Activated B cell treated with CpG ODN at 0.5 μM for 24 hours (primary cell): ENCODE measurements at regions of chr5 and their contacts with region 1.

Region 1: GRCh38 chr5:17216176-17216973 is 1.1 kb upstream of the BASP1 start:
- DNase-seq: peak; percentile 69
- ATAC-seq: peak; percentile 41
- H3K4me3 Mint-ChIP-seq: peak overlapping the region; percentile 94
- H3K27ac Mint-ChIP-seq: peak overlapping the region; percentile 97
- H3K4me1 Mint-ChIP-seq: peaks cover 59% of the 10 kb centered on the region
- H3K27me3 Mint-ChIP-seq: no peaks in the 10 kb centered on the region
- CTCF ChIP-seq: peak; percentile 65

Region 2: GRCh38 chr5:17189381-17190036 is 26.9 kb before region 1 on chr5:
- CTCF ChIA-PET with region 1: interaction called, 20 read pairs
- POLR2A ChIA-PET with region 1: interaction called, 6 read pairs
- intact Hi-C with region 1: no loop called
- DNase-seq: peak; percentile 44
- ATAC-seq: peak; percentile 37
- H3K4me3 Mint-ChIP-seq: no peak overlapping the region
- H3K27ac Mint-ChIP-seq: no peak overlapping the region
- H3K4me1 Mint-ChIP-seq: peaks cover 7% of the 10 kb centered on the region
- H3K27me3 Mint-ChIP-seq: peaks cover 3% of the 10 kb centered on the region
- CTCF ChIP-seq: no peak

Region 3: DNA sequence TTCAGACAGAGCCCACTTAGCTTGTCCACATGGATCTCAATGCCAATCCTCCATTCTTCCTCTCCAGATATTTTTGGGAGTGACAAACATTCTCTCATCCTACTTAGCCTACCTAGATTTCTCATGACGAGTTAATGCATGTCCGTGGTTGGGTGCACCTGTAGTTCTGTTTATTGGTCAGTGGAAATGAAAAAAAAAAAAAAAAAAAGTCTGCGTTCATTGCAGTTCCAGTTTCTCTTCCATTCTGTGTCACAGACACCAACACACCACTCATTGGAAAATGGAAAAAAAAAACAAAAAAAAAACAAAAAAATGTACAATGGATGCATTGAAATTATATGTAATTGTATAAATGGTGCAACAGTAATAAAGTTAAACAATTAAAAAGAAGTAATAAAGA is 60.1 kb after region 1 on chr5:
- CTCF ChIA-PET with region 1: interaction called, 20 read pairs
- POLR2A ChIA-PET with region 1: interaction called, 69 read pairs
- intact Hi-C with region 1: loop called (anchors 1 kb)
- DNase-seq: no peak
- ATAC-seq: no peak
- H3K4me3 Mint-ChIP-seq: peak overlapping the region; percentile 55
- H3K27ac Mint-ChIP-seq: peak overlapping the region; percentile 94
- H3K4me1 Mint-ChIP-seq: peaks cover 87% of the 10 kb centered on the region
- H3K27me3 Mint-ChIP-seq: no peaks in the 10 kb centered on the region
- CTCF ChIP-seq: no peak

Region 4: DNA sequence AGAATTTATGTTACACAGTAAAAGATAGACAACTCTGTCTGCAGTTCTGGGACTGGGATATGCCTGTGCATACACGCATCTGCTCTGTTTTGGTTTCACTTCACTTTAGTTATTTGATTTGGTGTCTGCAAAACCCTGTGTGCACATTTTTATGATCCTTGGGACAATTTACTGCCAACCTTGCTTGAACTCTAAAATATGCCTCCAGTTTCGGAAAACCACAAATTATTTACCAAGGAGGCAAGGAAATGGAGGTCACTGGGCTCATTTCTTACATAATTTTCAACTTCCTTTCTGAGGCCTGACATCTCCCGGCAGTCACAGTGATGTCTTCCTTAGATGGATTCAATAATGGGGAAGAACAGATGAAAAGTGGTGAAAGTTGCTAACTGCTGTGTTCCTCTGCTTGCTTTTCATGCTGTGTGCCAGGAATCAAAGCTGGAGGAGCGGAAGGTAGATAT is 220.4 kb after region 1 on chr5:
- CTCF ChIA-PET with region 1: interaction called, 3 read pairs
- POLR2A ChIA-PET with region 1: interaction called, 6 read pairs
- intact Hi-C with region 1: loop called (anchors 1 kb)
- DNase-seq: no peak
- ATAC-seq: peak; percentile 82
- H3K4me3 Mint-ChIP-seq: peak overlapping the region; percentile 79
- H3K27ac Mint-ChIP-seq: peak overlapping the region; percentile 82
- H3K4me1 Mint-ChIP-seq: peaks cover 27% of the 10 kb centered on the region
- H3K27me3 Mint-ChIP-seq: no peaks in the 10 kb centered on the region
- CTCF ChIP-seq: no peak

Region 5: GRCh38 chr5:17802256-17802655 is 585.9 kb after region 1 on chr5:
- CTCF ChIA-PET with region 1: interaction called, 3 read pairs
- POLR2A ChIA-PET with region 1: interaction called, 4 read pairs
- intact Hi-C with region 1: loop called (anchors 10 kb)
- DNase-seq: no peak
- ATAC-seq: no peak
- H3K4me3 Mint-ChIP-seq: no peak overlapping the region
- H3K27ac Mint-ChIP-seq: no peak overlapping the region
- H3K4me1 Mint-ChIP-seq: peaks cover 6% of the 10 kb centered on the region
- H3K27me3 Mint-ChIP-seq: no peaks in the 10 kb centered on the region
- CTCF ChIP-seq: no peak

Region 6: GRCh38 chr5:18113721-18114120 is 897.3 kb after region 1 on chr5:
- CTCF ChIA-PET with region 1: interaction called, 13 read pairs
- POLR2A ChIA-PET with region 1: interaction called, 3 read pairs
- intact Hi-C with region 1: loop called (anchors 1 kb)
- DNase-seq: no peak
- ATAC-seq: no peak
- H3K4me3 Mint-ChIP-seq: no peak overlapping the region
- H3K27ac Mint-ChIP-seq: no peak overlapping the region
- H3K4me1 Mint-ChIP-seq: no peaks in the 10 kb centered on the region
- H3K27me3 Mint-ChIP-seq: no peaks in the 10 kb centered on the region
- CTCF ChIP-seq: no peak

Region 7: DNA sequence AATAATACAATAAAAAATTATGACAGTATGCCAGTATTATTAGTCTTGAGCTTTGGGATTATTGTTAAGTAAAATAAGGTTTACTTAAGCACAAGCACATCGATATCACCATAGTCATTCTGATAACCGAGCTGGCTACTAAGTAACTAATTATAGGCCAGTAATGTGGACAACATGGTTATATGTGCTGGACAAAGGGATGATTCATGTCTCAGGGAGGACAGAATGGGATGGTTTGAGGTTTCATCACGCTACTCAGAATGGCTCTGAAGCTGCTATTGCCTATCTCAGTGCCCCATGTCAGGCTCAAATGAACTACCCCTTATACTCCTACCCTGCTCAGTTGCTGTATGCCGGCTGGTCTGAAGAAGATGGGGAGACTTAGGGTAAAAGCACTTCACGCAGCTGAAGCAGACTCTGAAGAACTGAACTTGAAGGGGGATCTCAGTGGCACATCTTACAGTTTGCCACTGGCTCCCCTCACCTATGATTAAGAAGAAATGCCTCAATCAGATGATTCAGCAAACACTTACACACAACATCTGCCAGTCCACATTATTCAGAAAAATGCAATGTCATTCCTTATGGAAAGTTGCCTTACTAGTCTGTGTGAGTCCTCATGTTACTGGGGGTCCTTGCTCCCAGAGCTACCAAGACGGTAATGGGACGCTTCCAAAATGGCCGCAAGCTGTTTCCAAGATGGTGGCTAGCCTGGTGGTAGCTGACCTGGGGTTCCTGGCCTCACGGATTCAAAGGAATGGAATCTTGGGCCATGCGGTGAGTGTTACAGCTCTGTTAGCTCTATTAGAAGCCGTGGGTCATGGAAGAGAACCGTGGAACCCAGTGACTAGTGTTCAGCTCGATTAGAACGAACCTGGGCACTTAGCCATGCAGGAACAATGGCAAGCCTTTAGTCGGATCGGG is 1516.4 kb after region 1 on chr5:
- CTCF ChIA-PET with region 1: no interaction called
- POLR2A ChIA-PET with region 1: interaction called, 10 read pairs
- intact Hi-C with region 1: no loop called
- DNase-seq: no peak
- ATAC-seq: no peak
- H3K4me3 Mint-ChIP-seq: no peak overlapping the region
- H3K27ac Mint-ChIP-seq: no peak overlapping the region
- H3K4me1 Mint-ChIP-seq: peaks cover 5% of the 10 kb centered on the region
- H3K27me3 Mint-ChIP-seq: no peaks in the 10 kb centered on the region
- CTCF ChIP-seq: no peak